WTC11 (cell line): ENCODE measurements at regions of chr6 and their contacts with region 1.

Region 1: GRCh38 chr6:53151676-53152075 is 3.0 kb upstream of the GCM1 start:
- DNase-seq: peak; percentile 67
- ATAC-seq: peak; percentile 96
- H3K4me3 Mint-ChIP-seq: no peak overlapping the region
- H3K27ac Mint-ChIP-seq: no peak overlapping the region
- H3K4me1 Mint-ChIP-seq: no peaks in the 10 kb centered on the region
- H3K27me3 Mint-ChIP-seq: peaks cover 7% of the 10 kb centered on the region; the same call in 1 of the 2 replicates
- CTCF ChIP-seq: peak; percentile 34; the same call in 1 of the 2 replicates

Region 2: DNA sequence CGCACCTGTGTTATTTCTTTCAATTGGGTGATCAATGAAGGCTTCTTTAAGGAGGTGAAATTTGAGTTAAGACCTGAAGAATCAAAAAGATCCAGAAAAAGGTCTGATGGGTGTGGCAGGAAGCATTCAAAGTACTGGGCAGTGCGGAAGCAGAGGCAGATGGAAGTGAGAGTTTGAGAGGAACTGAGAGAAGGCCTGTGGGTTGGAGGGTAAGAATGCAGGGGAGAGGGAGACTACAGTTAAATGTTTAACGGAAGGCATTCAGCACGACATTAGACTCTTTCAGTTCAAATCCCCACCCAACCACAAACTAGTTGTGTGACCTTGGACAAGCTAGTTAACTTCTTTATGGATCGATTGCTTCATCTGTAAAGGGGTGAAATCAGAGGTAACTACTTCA is 47.5 kb after region 1 on chr6:
- CTCF ChIA-PET with region 1: no interaction called
- POLR2A ChIA-PET with region 1: no interaction called
- DNase-seq: no peak
- ATAC-seq: no peak
- H3K4me3 Mint-ChIP-seq: no peak overlapping the region
- H3K27ac Mint-ChIP-seq: no peak overlapping the region
- H3K4me1 Mint-ChIP-seq: peaks cover 10% of the 10 kb centered on the region
- H3K27me3 Mint-ChIP-seq: no peaks in the 10 kb centered on the region; the same call in 1 of the 2 replicates
- CTCF ChIP-seq: no peak

Region 3: GRCh38 chr6:53484476-53485280 is 333.0 kb after region 1 on chr6:
- CTCF ChIA-PET with region 1: interaction called, 10 read pairs
- POLR2A ChIA-PET with region 1: no interaction called
- DNase-seq: peak; percentile 62
- ATAC-seq: peak; percentile 56; the same call in 1 of the 2 replicates
- H3K4me3 Mint-ChIP-seq: no peak overlapping the region
- H3K27ac Mint-ChIP-seq: no peak overlapping the region
- H3K4me1 Mint-ChIP-seq: no peaks in the 10 kb centered on the region
- H3K27me3 Mint-ChIP-seq: no peaks in the 10 kb centered on the region
- CTCF ChIP-seq: peak; percentile 75

Region 4: DNA sequence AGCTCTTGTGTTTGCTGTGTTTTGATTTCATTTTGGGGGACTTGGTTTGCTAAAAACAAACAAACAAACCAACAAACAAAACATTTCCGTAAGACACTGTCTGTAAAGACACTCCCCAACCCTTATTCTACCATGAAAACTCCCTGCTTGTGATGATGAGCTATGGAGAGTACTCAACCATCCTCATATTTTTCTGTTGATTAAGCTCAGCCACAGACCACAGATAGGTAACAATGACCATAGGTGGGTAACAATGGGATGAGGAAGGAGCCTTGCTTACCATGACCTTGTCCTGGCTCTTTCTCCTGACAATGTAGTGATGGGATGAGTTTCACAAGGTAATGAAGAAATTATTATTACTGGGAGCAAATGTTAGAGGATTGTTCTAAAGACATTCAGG is 1683.5 kb after region 1 on chr6:
- CTCF ChIA-PET with region 1: no interaction called
- POLR2A ChIA-PET with region 1: no interaction called
- DNase-seq: no peak
- ATAC-seq: no peak
- H3K4me3 Mint-ChIP-seq: no peak overlapping the region
- H3K27ac Mint-ChIP-seq: no peak overlapping the region
- H3K4me1 Mint-ChIP-seq: no peaks in the 10 kb centered on the region
- H3K27me3 Mint-ChIP-seq: no peaks in the 10 kb centered on the region
- CTCF ChIP-seq: no peak